ENCODE measurements at regions of chr11 and their contacts with region 1.

Region 1: GRCh38 chr11:116276051-116277044 is 496.4 kb downstream of the BUD13 start:
- DNase-seq: peak; percentile 66 to 90 (median 88)
- ATAC-seq: peak; percentile 65 to 88
- H3K4me3 ChIP-seq: no peak overlapping the region
- H3K27ac ChIP-seq: no peak overlapping the region
- H3K4me1 ChIP-seq: no peaks in the 10 kb centered on the region
- H3K27me3 ChIP-seq: no peaks in the 10 kb centered on the region

Region 2: DNA sequence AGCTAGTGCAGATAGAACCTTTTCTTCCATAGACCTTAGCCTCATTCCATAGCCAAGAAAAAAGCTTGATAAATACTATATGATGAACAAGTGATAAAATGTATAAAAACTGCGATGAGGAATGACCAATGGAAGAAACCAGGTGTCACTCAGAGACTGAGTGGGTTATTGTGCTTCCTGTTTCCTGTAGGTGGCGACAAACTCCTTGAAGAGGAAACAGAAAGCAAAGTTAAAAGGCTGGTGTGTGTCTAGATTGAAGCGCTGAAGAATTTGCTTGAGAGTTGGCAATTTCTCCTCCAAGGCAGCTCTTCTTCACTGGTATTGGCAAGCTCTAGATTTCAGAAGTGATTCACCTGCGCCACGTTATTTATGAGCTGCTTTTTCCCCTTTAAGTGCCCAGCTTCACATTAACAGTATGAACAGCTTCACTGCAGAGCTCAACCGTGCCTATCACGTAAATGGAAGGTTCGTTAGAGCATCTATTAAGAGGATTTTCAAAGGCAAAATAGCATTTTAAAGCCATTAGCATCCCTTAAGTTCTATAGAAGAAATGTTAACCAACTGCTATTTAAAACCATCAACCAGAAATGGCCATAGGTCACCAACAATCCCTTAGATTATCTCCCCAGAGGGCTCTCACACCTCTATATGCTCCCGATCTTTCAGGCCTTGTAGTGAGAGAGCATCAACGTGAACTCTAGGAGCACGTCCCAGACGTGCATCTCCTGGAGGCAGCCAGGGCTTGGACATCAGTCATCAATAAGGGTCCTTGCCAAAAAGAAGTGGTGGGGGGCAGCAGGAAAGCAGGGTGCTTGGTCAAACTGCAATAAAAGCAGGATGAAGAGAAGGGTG is 951.5 kb before region 1 on chr11:
- intact Hi-C with region 1: loop called in 3 of 4 experiments (anchors 5 to 10 kb)
- DNase-seq: no peak
- ATAC-seq: peak; percentile 83 to 85
- H3K4me3 ChIP-seq: no peak overlapping the region
- H3K27ac ChIP-seq: no peak overlapping the region
- H3K4me1 ChIP-seq: no peaks in the 10 kb centered on the region
- H3K27me3 ChIP-seq: no peaks in the 10 kb centered on the region

Region 3: GRCh38 chr11:115334932-115335788 is 941.2 kb before region 1 on chr11:
- intact Hi-C with region 1: loop called in 2 of 4 experiments (anchors 5 to 10 kb)
- DNase-seq: no peak
- ATAC-seq: no peak
- H3K4me3 ChIP-seq: no peak overlapping the region
- H3K27ac ChIP-seq: no peak overlapping the region
- H3K4me1 ChIP-seq: no peaks in the 10 kb centered on the region
- H3K27me3 ChIP-seq: no peaks in the 10 kb centered on the region

Region 4: DNA sequence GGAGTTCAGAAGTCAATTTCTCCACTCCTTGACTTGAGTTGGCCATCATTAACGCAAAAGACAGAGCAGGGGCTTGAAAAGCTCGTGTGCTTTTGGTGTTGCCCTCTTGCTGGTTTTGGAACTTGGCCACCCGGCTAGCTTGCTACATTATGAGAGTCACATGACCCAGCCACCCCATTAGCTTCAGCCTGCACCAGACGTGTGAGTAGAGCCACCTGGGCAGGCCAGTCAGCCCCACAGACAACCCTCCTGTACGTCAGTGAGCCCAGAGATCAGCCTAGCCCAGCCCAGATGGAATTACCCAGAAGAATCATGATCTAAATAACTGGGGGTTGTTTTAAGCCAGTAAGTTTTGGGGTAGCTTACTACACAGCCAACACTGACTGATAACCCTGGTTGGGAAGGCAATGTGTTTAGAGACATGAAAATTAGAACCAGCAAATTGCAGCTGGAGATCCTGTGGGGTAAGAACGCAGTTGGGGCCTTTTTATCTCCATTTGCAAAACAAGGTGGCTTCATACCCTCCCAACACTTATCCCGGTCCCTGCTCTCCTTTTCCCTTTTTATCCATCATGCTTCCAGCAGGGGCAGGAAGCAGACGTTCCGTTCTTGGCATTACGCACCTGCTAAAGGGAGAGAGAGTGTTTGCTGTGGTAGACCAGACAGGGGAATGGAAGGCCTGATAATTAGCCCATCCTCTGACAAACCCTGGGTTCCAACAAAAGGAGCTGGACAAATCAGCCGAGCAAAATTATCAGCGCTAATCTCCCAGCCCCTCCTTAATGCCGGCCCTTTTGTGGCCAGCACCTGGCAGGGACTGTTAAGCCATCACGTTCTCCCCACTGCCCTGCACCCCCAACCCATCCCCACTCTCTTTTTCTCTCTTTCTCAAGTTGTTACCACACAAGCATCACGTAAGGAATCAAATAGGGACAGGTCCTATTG is 223.5 kb before region 1 on chr11:
- intact Hi-C with region 1: no loop called
- DNase-seq: no peak
- ATAC-seq: no peak
- H3K4me3 ChIP-seq: no peak overlapping the region
- H3K27ac ChIP-seq: no peak overlapping the region
- H3K4me1 ChIP-seq: no peaks in the 10 kb centered on the region
- H3K27me3 ChIP-seq: no peaks in the 10 kb centered on the region

Region 5: GRCh38 chr11:116249561-116249960 is 26.8 kb before region 1 on chr11:
- intact Hi-C with region 1: no loop called
- DNase-seq: no peak
- ATAC-seq: no peak
- H3K4me3 ChIP-seq: no peak overlapping the region
- H3K27ac ChIP-seq: no peak overlapping the region
- H3K4me1 ChIP-seq: no peaks in the 10 kb centered on the region
- H3K27me3 ChIP-seq: no peaks in the 10 kb centered on the region

Region 6: GRCh38 chr11:116544721-116545120 is 268.4 kb after region 1 on chr11:
- intact Hi-C with region 1: no loop called
- DNase-seq: no peak
- ATAC-seq: no peak
- H3K4me3 ChIP-seq: no peak overlapping the region
- H3K27ac ChIP-seq: no peak overlapping the region
- H3K4me1 ChIP-seq: no peaks in the 10 kb centered on the region
- H3K27me3 ChIP-seq: no peaks in the 10 kb centered on the region